ENCODE measurements at regions of chr5 and their contacts with region 1.

Region 1: DNA sequence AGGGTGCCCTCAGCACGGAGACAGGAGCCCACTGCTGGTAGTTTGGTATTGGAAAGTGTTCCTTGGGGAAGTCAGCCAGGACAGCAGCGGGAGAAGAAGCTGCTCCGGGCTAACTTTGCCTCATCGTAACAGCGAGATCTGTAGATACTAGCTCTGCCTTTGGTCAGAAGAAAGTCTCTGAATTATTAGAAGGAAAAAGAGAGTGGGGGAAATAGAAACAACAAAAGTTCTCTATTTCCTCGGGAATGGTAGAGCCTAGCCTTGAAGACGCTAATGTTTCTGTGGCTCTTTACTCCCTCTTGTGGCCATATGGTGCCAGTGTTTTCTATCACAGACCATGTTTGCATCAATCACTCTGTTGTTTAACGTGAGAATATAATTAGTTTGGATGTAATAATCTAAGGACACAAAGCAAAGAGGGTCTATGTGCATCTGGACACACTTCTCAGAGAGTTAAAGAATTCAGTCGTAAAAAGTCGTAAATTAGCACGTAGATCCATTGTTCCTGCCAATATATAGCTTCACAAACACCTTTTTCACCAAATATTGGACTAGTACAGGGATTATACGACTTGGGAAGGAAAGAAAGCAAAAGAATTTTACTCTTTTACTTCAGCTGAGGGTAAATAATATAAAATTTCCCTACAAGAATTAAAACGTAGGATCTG is 40.2 kb upstream of the HSD17B4 start:
- DNase-seq: peak in 4 of 5 donors; percentile 33 to 52 (median 50)
- ATAC-seq: peak; percentile 90 to 97 (median 94)
- H3K4me3 ChIP-seq: peak overlapping the region in 11 of 12 donors; percentile 28 to 67 (median 51)
- H3K27ac ChIP-seq: peak overlapping the region in 8 of 12 donors; percentile 1 to 77 (median 54)
- H3K4me1 ChIP-seq: peaks cover 0 to 29% (median 0%) of the 10 kb centered on the region in 12 donors
- H3K27me3 ChIP-seq: peaks cover 0 to 14% (median 0%) of the 10 kb centered on the region in 9 donors
- CTCF ChIP-seq: peak; percentile 90 to 97 (median 94)
- POLR2A ChIP-seq: no peak

Region 2: DNA sequence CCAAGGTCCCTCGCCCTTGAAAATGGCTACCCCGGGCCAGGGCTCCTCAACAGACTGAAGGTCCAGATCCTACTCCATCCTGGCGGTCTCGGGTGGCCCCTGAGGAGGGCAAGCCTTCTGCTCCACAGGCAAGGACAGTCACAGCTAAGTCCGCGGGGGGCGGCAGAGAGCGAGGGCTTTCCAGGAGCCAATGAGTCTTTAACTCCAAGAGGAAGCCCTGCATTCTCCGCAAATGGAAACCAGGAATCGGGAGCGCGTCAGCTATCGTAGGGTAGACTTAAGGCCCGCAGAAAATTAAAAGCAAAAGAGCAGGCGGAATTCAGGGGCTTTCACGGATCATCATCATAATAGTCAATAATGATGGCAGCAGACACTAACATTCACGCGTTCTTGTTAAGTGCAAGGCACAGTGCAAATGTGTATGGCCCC is 144.1 kb before region 1 on chr5:
- intact Hi-C with region 1: loop called in 5 of 10 experiments (anchors 5 to 10 kb)
- DNase-seq: peak; percentile 89 to 96 (median 95)
- ATAC-seq: peak; percentile 92 to 95 (median 94)
- H3K4me3 ChIP-seq: peak overlapping the region; percentile 41 to 90 (median 72)
- H3K27ac ChIP-seq: peak overlapping the region; percentile 37 to 97 (median 92)
- H3K4me1 ChIP-seq: peaks cover 0 to 44% (median 6%) of the 10 kb centered on the region in 12 donors
- H3K27me3 ChIP-seq: no peaks in the 10 kb centered on the region
- CTCF ChIP-seq: peak in 8 of 12 donors; percentile 18 to 97 (median 70)
- POLR2A ChIP-seq: no peak

Region 3: DNA sequence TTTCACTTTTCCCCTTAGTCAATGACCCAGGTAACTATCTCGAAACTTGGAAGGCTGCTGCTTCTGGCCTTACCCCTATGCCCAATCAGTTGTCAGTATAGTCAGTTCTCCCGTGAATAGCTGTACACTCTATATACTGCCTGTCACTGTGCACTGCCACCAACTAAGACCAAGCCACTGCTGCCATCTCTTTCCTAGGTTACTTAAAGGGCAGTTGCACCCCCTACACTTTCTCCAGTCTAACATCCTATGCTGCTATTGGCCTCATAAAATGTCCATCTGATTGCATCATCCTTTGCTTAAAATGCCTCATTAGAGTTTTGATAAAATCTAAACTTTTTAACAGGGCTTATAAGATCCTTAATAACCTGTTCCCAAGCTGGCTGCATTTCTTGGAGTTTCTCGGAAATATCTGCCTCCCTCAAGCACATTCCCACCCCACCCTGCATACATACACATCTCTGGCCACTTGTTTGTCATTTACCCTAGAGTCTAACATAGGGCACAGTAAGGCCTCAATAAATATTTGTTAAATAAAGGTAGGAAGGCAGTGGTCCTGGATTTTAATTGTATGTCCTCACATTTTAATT is 89.0 kb before region 1 on chr5:
- intact Hi-C with region 1: loop called in 7 of 10 experiments (anchors 2 to 10 kb)
- DNase-seq: no peak
- ATAC-seq: no peak
- H3K4me3 ChIP-seq: no peak overlapping the region
- H3K27ac ChIP-seq: peak overlapping the region in 6 of 12 donors; percentile 26 to 86 (median 46)
- H3K4me1 ChIP-seq: peaks cover 0 to 93% (median 8%) of the 10 kb centered on the region in 12 donors
- H3K27me3 ChIP-seq: no peaks in the 10 kb centered on the region
- CTCF ChIP-seq: no peak
- POLR2A ChIP-seq: no peak

Region 4: GRCh38 chr5:119336845-119337580 is 75.1 kb before region 1 on chr5:
- intact Hi-C with region 1: loop called in 2 of 10 experiments (anchors 5 kb)
- DNase-seq: no peak
- ATAC-seq: no peak
- H3K4me3 ChIP-seq: no peak overlapping the region
- H3K27ac ChIP-seq: peak overlapping the region in 9 of 12 donors; percentile 2 to 73 (median 39)
- H3K4me1 ChIP-seq: peaks cover 0 to 85% (median 11%) of the 10 kb centered on the region in 12 donors
- H3K27me3 ChIP-seq: no peaks in the 10 kb centered on the region
- CTCF ChIP-seq: no peak
- POLR2A ChIP-seq: no peak